Right cardiac atrium (tissue), 5 donors: ENCODE measurements at regions of chr11 and their contacts with region 1.

Region 1: GRCh38 chr11:19482319-19483100 is 230.1 kb upstream of the NAV2 start:
- DNase-seq: no peak
- ATAC-seq: no peak
- H3K4me3 ChIP-seq: no peak overlapping the region
- H3K27ac ChIP-seq: no peak overlapping the region
- H3K4me1 ChIP-seq: no peaks in the 10 kb centered on the region
- H3K27me3 ChIP-seq: no peaks in the 10 kb centered on the region

Region 2: GRCh38 chr11:19506816-19507486 is 24.4 kb after region 1 on chr11:
- intact Hi-C with region 1: loop called in 1 of 4 experiments (anchors 2 kb)
- DNase-seq: no peak
- ATAC-seq: no peak
- H3K4me3 ChIP-seq: no peak overlapping the region
- H3K27ac ChIP-seq: no peak overlapping the region
- H3K4me1 ChIP-seq: peaks cover 11% of the 10 kb centered on the region
- H3K27me3 ChIP-seq: no peaks in the 10 kb centered on the region

Region 3: DNA sequence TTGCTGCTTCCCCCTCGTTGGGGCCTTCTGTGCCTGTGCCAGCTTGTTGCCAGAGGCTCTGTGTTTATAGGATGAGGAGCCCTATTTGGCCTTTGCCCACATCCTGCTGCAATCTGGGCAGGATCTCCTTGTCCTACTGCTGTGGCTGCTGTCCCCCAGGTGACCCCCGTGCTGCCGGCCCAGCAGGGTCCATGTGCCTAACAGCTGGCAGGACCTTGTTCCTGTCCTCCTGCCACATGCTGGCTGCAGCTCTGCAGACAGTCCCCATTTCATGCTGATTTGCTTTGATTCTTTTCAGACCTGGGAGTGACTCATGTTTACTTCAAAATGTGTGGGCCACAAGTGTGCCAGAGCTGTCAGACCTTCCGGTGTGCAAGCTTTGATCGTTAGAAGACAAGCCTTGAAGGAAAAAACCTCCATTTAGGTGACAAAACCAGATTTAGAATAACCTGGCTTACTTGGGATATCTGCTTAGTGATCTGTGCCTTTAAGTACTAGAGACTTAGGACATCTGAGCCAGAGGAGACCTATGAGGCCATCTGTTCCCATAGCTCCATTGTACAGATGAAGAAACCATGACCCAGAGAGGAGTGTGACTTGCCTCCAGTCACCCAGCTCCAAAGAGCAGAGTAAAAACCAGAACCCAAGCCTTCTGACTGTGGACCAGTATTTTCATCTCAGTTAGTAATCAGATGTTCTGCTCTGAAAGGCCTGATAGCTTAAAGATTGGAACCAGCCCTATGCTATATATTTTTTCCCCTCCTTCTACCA is 241.2 kb after region 1 on chr11:
- intact Hi-C with region 1: no loop called
- DNase-seq: peak in 2 of 3 donors; percentile 56 to 65
- ATAC-seq: peak; percentile 13 to 36
- H3K4me3 ChIP-seq: no peak overlapping the region
- H3K27ac ChIP-seq: no peak overlapping the region
- H3K4me1 ChIP-seq: peaks cover 10% of the 10 kb centered on the region
- H3K27me3 ChIP-seq: no peaks in the 10 kb centered on the region